ENCODE measurements at regions of chr3 and their contacts with region 1.

Region 1: GRCh38 chr3:71305231-71306206 is 278.0 kb downstream of the FOXP1 start:
- DNase-seq: peak; percentile 38
- ATAC-seq: peak; percentile 8
- H3K4me3 Mint-ChIP-seq: peak overlapping the region; percentile 80
- H3K27ac Mint-ChIP-seq: peak overlapping the region; percentile 96
- H3K4me1 Mint-ChIP-seq: peaks cover 81% of the 10 kb centered on the region
- H3K27me3 Mint-ChIP-seq: no peaks in the 10 kb centered on the region

Region 2: GRCh38 chr3:70531063-70531657 is 774.4 kb before region 1 on chr3:
- CTCF ChIA-PET with region 1: no interaction called
- POLR2A ChIA-PET with region 1: no interaction called
- intact Hi-C with region 1: loop called in 1 of 2 experiments (anchors 5 kb)
- DNase-seq: no peak
- ATAC-seq: no peak
- H3K4me3 Mint-ChIP-seq: no peak overlapping the region
- H3K27ac Mint-ChIP-seq: no peak overlapping the region
- H3K4me1 Mint-ChIP-seq: no peaks in the 10 kb centered on the region
- H3K27me3 Mint-ChIP-seq: peaks cover 4% of the 10 kb centered on the region

Region 3: GRCh38 chr3:70771426-70772147 is 533.9 kb before region 1 on chr3:
- CTCF ChIA-PET with region 1: no interaction called
- POLR2A ChIA-PET with region 1: no interaction called
- intact Hi-C with region 1: loop called in 1 of 2 experiments (anchors 10 kb)
- DNase-seq: no peak
- ATAC-seq: peak; percentile 70
- H3K4me3 Mint-ChIP-seq: no peak overlapping the region
- H3K27ac Mint-ChIP-seq: no peak overlapping the region
- H3K4me1 Mint-ChIP-seq: peaks cover 12% of the 10 kb centered on the region
- H3K27me3 Mint-ChIP-seq: peaks cover 43% of the 10 kb centered on the region

Region 4: GRCh38 chr3:71087143-71088018 is 218.1 kb before region 1 on chr3:
- CTCF ChIA-PET with region 1: no interaction called
- POLR2A ChIA-PET with region 1: interaction called, 14 read pairs
- intact Hi-C with region 1: loop called (anchors 1 kb)
- DNase-seq: peak; percentile 61
- ATAC-seq: peak; percentile 74
- H3K4me3 Mint-ChIP-seq: peak overlapping the region; percentile 52
- H3K27ac Mint-ChIP-seq: peak overlapping the region; percentile 93
- H3K4me1 Mint-ChIP-seq: peaks cover 94% of the 10 kb centered on the region
- H3K27me3 Mint-ChIP-seq: no peaks in the 10 kb centered on the region

Region 5: DNA sequence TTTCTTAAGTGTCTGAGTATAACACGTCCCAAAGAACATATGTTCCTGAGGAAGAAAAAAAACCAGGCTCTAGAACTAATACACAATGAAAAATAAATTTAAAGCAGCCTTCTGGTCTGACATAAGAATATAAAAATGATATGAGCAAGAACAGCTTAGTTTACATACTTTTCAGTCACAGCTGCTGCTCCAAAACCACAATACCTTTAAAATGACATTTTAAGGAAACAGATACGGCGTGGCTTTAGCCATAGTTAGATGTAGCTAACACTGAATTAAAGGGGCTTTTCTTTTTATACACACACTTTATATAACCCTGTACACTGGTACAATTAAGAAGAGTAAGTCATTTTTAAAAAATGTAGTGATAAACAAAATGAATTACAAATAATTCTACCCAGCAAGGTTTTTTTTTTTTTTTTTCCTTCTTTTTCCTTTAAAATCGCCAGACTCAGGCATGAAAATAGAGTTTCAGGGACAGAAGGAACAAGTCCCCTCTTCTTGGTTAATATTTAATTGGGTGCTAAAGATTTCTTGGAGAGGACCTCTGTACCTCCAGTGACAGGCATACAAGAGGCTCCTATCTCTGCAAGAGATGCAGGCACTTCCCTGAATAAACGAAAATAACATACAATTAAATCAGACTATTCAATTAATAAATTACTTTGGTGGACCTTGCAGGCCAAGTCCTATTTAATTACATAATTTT is 12.4 kb after region 1 on chr3:
- CTCF ChIA-PET with region 1: no interaction called
- POLR2A ChIA-PET with region 1: no interaction called
- intact Hi-C with region 1: no loop called
- DNase-seq: no peak
- ATAC-seq: no peak
- H3K4me3 Mint-ChIP-seq: no peak overlapping the region
- H3K27ac Mint-ChIP-seq: no peak overlapping the region
- H3K4me1 Mint-ChIP-seq: peaks cover 40% of the 10 kb centered on the region
- H3K27me3 Mint-ChIP-seq: no peaks in the 10 kb centered on the region

Region 6: DNA sequence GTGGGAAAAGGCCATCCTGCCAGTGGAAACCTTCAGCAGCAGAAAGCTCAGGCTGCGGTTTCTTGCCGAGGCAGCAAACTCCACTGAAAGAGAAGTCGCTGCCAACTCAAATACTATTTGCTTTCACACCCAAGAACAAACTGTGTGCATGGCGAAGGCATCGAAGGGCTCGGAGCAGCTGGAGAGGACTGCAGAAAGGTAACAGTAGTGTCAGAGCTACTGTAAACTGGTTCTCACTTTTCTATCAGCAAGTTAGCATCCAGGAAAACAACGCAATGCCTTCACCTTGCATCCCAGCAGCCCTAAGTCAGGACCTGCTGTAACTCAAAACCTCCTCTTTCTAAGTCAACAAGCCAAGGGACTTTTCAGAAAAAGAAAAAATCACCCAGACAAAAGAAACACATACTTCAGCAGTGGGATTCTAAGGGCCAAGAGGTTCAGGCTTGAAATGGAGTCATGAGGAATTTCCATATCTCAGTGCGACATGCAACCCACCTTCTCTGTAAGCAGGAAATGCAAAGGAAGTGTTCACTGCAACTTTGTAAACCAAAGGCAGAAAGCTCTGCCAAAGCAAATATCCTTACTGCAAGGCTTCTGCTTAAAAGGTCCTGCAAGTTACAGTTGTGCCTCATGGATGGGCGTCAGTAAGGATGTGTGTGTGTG is 84.5 kb after region 1 on chr3:
- CTCF ChIA-PET with region 1: no interaction called
- POLR2A ChIA-PET with region 1: interaction called, 5 read pairs
- intact Hi-C with region 1: loop called (anchors 1 to 2 kb)
- DNase-seq: peak; percentile 52
- ATAC-seq: peak; percentile 18
- H3K4me3 Mint-ChIP-seq: peak overlapping the region; percentile 52
- H3K27ac Mint-ChIP-seq: peak overlapping the region; percentile 69
- H3K4me1 Mint-ChIP-seq: peaks cover 78% of the 10 kb centered on the region
- H3K27me3 Mint-ChIP-seq: no peaks in the 10 kb centered on the region

Region 7: GRCh38 chr3:71512000-71512399 is 206.5 kb after region 1 on chr3:
- CTCF ChIA-PET with region 1: no interaction called
- POLR2A ChIA-PET with region 1: no interaction called
- intact Hi-C with region 1: loop called (anchors 5 kb)
- DNase-seq: peak; percentile 50
- ATAC-seq: peak; percentile 95
- H3K4me3 Mint-ChIP-seq: no peak overlapping the region
- H3K27ac Mint-ChIP-seq: no peak overlapping the region
- H3K4me1 Mint-ChIP-seq: peaks cover 16% of the 10 kb centered on the region
- H3K27me3 Mint-ChIP-seq: no peaks in the 10 kb centered on the region

Measured in activated CD4-positive, alpha-beta T cell treated with anti-CD3 and anti-CD28 coated beads for 36 hours (primary cell).